ENCODE measurements at regions of chr22 and their contacts with region 1.

Region 1: DNA sequence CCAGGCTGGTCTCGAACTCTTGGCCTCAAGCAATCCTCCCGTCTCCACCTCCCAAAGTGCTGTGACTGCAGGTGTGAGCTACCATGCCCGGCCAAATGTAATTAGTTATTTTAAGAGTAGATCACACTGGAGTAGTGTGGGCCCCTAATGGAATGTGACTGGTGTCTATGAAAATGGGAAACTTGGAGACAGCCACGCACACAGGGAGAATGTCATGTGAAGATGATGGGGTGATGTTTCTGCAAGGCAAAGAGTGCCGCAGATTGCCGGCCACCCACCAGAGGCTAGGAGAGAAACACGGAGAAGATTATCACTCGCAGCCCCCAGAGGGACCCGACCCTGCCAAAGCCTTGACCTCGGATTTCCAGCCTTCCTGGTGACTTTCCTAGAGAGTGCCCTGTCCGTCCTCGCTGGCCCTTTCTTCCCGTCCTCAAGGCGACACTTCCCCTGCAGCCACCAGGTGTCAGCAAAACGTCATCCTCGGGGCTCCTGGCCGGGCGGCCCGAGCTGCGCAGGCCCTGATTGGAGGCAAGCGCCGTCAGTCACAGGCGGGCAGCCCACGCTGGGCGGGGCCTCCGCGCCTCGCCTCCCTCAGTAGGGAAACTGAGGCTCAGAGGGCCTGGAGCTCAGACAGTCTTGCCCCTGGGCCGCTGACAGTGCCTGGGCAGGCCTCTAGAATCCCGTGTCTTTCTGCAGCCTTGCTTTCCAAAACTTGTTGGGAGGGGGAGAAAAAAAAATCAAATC is 16.3 kb downstream of the CRYBB2 start:
- DNase-seq: peak; percentile 79
- H3K4me3 ChIP-seq: no peak overlapping the region
- H3K27ac ChIP-seq: no peak overlapping the region
- H3K4me1 ChIP-seq: no peaks in the 10 kb centered on the region
- CTCF ChIP-seq: peak; percentile 83

Region 2: GRCh38 chr22:25172153-25172552 is 63.6 kb before region 1 on chr22:
- CTCF ChIA-PET with region 1: no interaction called
- POLR2A ChIA-PET with region 1: no interaction called
- intact Hi-C with region 1: no loop called
- DNase-seq: no peak
- H3K4me3 ChIP-seq: no peak overlapping the region
- H3K27ac ChIP-seq: no peak overlapping the region
- H3K4me1 ChIP-seq: no peaks in the 10 kb centered on the region
- CTCF ChIP-seq: peak; percentile 53

Region 3: DNA sequence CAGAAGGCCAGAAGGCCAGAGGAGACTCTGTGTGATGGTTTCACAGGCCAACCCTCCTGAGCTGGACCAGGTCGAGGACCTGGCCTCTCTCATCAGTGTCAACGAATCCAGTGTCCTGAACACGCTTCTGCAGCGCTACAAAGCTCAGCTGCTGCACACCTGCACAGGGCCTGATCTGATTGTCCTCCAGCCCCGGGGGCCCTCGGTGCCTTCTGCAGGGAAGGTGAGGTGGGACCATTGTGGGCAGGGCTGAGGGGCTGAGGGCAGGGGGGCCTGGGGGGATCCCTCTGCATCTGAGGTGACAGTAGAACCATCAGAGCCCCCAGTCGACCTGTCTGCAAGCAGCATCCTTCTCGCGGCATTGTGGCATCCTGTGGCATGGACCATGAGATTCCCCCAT is 536.6 kb after region 1 on chr22:
- CTCF ChIA-PET with region 1: no interaction called
- POLR2A ChIA-PET with region 1: no interaction called
- intact Hi-C with region 1: loop called (anchors 2 kb)
- DNase-seq: no peak
- H3K4me3 ChIP-seq: no peak overlapping the region
- H3K27ac ChIP-seq: no peak overlapping the region
- H3K4me1 ChIP-seq: no peaks in the 10 kb centered on the region
- CTCF ChIP-seq: no peak

Measured in OCI-LY7 (cell line).